Activated CD8-positive, alpha-beta T cell treated with anti-CD3 and anti-CD28 coated beads for 36 hours (primary cell): ENCODE measurements at regions of chr5 and their contacts with region 1.

Region 1: DNA sequence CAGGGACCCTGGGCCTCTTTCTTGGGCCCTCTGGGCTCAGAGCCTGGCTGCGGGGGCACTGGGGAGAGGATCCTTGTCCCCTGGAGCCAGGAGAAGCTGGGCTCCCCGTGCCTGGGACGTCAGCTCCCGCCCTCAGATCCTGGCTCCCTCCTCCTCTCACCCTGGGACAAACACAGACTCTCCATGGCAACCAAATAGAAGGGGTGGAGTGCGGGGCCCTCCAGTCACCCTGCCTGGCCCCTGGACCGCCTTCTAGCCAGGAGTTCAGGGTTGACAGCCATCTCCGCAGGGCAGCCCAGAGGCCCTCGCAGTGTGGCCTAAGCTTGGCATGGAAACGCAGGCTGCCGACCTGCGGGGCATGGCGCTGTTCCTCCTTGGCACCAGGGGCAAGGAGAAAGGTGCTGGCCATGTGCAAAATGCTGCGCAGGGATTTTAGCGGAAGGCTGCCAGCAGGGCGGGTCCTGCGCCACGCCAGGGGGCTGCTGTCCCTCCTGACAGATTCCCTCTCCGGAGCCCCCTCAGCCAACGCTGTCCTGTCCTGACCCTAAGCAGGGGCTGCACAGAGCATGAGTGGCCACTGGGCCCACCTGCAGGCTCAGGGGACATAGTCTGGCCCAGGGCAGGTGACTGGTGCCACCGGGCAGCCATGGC is 1.0 kb downstream of the ZDHHC11 start:
- DNase-seq: no peak
- ATAC-seq: no peak
- H3K4me3 Mint-ChIP-seq: no peak overlapping the region
- H3K27ac Mint-ChIP-seq: no peak overlapping the region
- H3K4me1 Mint-ChIP-seq: peaks cover 8% of the 10 kb centered on the region
- H3K27me3 Mint-ChIP-seq: peaks cover 1% of the 10 kb centered on the region
- CTCF ChIP-seq: no peak

Region 2: DNA sequence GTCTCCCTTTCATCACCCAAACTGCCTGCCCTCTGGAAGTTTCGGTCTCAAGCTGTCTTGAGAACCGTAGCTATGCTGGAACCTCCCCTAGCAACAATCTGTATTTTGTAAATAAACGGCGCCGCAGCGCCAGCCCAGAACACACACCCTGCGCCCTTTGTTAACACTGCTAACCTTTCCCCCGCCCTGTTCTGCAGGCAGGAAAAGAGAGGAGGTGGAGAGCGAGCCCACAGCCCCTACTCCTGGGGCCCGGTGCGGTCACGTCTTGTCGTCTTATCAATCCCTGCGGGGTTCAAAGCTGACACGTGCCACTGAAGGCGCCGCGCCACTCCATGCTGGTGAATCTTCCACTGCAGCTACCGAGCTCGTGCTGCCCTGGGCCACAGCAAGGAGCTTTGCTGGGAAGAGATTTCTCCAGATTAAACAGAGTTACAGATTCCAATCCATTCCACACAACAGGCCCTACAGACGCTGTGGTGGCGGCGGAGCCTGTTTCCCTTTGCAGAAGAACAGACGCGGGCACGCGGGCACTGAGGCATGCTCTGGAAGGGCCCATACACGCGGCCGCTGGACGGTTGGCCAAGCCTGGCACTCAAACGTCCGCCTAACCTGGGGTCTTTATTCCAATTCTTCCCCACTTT is 90.5 kb before region 1 on chr5:
- CTCF ChIA-PET with region 1: no interaction called
- POLR2A ChIA-PET with region 1: no interaction called
- intact Hi-C with region 1: loop called (anchors 5 kb)
- DNase-seq: peak; percentile 49
- ATAC-seq: peak; percentile 64
- H3K4me3 Mint-ChIP-seq: no peak overlapping the region
- H3K27ac Mint-ChIP-seq: no peak overlapping the region
- H3K4me1 Mint-ChIP-seq: peaks cover 11% of the 10 kb centered on the region
- H3K27me3 Mint-ChIP-seq: no peaks in the 10 kb centered on the region
- CTCF ChIP-seq: no peak

Region 3: DNA sequence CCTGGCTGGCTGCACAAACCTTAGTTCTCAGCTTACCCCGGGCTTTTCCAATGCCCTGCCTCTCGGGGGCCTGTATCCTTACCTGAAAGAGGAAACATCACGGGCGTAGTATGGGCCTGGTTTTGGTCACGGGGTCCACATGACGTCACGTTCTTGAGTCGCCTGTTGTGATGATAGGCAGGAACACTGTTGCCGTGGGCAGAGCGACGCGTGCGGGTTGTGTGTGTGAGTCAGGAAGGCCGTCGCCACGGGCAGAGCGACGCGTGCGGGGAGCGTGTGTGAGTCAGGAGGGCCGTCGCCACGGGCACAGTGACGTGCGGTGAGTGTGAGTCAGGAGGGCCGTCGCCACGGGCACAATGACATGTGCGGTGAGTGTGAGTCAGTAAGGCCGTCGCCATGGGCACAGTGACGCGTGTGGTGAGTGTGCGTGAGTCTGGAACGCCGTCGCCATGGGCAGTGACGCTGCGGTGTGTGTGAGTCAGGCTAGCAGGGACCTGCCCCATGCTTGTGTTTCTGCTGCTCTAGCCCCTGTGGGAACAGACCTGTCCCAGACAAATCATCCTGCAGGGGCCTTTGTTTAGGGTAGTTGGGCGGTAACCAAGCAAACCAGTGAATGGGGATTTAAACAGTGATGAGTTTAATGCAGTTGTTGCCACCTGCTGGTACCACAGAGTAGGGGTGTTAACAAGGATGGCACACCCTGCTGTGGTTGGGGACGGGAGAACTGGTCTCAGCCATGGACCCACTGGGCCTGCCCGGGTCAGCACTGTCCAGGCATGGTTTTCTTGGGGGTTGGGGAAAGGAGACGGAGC is 62.7 kb after region 1 on chr5:
- CTCF ChIA-PET with region 1: no interaction called
- POLR2A ChIA-PET with region 1: no interaction called
- intact Hi-C with region 1: no loop called
- DNase-seq: peak; percentile 76
- ATAC-seq: peak; percentile 88
- H3K4me3 Mint-ChIP-seq: no peak overlapping the region
- H3K27ac Mint-ChIP-seq: peak overlapping the region; percentile 58
- H3K4me1 Mint-ChIP-seq: peaks cover 4% of the 10 kb centered on the region
- H3K27me3 Mint-ChIP-seq: no peaks in the 10 kb centered on the region
- CTCF ChIP-seq: no peak